Uterus (tissue), 4 donors: ENCODE measurements at regions of chr7 and their contacts with region 1.

Region 1: GRCh38 chr7:150898475-150899011 is 46.2 kb downstream of the AOC1 start:
- DNase-seq: peak; percentile 76 to 79
- H3K4me3 ChIP-seq: no peak overlapping the region
- H3K27ac ChIP-seq: no peak overlapping the region
- H3K4me1 ChIP-seq: no peaks in the 10 kb centered on the region
- H3K27me3 ChIP-seq: no peaks in the 10 kb centered on the region
- CTCF ChIP-seq: peak; percentile 89 to 96 (median 94)
- POLR2A ChIP-seq: no peak

Region 2: GRCh38 chr7:150990418-150991186 is 92.1 kb after region 1 on chr7 and contains the start of gene NOS3:
- intact Hi-C with region 1: loop called (anchors 2 kb)
- DNase-seq: no peak
- H3K4me3 ChIP-seq: no peak within 1 kb of the TSS
- H3K27ac ChIP-seq: peak within 1 kb of the TSS in 1 of 2 donors; percentile 54
- H3K4me1 ChIP-seq: peaks cover 0 to 10% of the 10 kb centered on the region in 2 donors
- H3K27me3 ChIP-seq: no peaks in the 10 kb centered on the region
- CTCF ChIP-seq: no peak
- POLR2A ChIP-seq: no peak
- total RNA-seq, gene NOS3: 6.6 to 50.1 (median 15.8) TPM